AG04450 (cell line): ENCODE measurements at regions of chr1 and their contacts with region 1.

Region 1: GRCh38 chr1:40849801-40850592 is 12.2 kb downstream of the CITED4 start:
- DNase-seq: peak; percentile 16
- H3K4me3 ChIP-seq: no peak overlapping the region
- H3K27ac ChIP-seq: no peak overlapping the region
- H3K27me3 ChIP-seq: peaks cover 6% of the 10 kb centered on the region
- CTCF ChIP-seq: peak; percentile 88

Region 2: GRCh38 chr1:40630488-40631381 is 219.3 kb before region 1 on chr1:
- CTCF ChIA-PET with region 1: interaction called, 17 read pairs
- POLR2A ChIA-PET with region 1: no interaction called
- DNase-seq: no peak
- H3K4me3 ChIP-seq: no peak overlapping the region
- H3K27ac ChIP-seq: no peak overlapping the region
- H3K27me3 ChIP-seq: no peaks in the 10 kb centered on the region
- CTCF ChIP-seq: peak; percentile 60

Region 3: GRCh38 chr1:40774266-40774998 is 75.6 kb before region 1 on chr1:
- CTCF ChIA-PET with region 1: interaction called, 27 read pairs
- POLR2A ChIA-PET with region 1: no interaction called
- DNase-seq: no peak
- H3K4me3 ChIP-seq: no peak overlapping the region
- H3K27ac ChIP-seq: no peak overlapping the region
- H3K27me3 ChIP-seq: no peaks in the 10 kb centered on the region
- CTCF ChIP-seq: peak; percentile 70

Region 4: GRCh38 chr1:40825435-40825788 is 24.6 kb before region 1 on chr1:
- CTCF ChIA-PET with region 1: interaction called, 11 read pairs
- POLR2A ChIA-PET with region 1: no interaction called
- DNase-seq: no peak
- H3K4me3 ChIP-seq: no peak overlapping the region
- H3K27ac ChIP-seq: peak overlapping the region; percentile 47
- H3K27me3 ChIP-seq: peaks cover 15% of the 10 kb centered on the region
- CTCF ChIP-seq: no peak

Region 5: DNA sequence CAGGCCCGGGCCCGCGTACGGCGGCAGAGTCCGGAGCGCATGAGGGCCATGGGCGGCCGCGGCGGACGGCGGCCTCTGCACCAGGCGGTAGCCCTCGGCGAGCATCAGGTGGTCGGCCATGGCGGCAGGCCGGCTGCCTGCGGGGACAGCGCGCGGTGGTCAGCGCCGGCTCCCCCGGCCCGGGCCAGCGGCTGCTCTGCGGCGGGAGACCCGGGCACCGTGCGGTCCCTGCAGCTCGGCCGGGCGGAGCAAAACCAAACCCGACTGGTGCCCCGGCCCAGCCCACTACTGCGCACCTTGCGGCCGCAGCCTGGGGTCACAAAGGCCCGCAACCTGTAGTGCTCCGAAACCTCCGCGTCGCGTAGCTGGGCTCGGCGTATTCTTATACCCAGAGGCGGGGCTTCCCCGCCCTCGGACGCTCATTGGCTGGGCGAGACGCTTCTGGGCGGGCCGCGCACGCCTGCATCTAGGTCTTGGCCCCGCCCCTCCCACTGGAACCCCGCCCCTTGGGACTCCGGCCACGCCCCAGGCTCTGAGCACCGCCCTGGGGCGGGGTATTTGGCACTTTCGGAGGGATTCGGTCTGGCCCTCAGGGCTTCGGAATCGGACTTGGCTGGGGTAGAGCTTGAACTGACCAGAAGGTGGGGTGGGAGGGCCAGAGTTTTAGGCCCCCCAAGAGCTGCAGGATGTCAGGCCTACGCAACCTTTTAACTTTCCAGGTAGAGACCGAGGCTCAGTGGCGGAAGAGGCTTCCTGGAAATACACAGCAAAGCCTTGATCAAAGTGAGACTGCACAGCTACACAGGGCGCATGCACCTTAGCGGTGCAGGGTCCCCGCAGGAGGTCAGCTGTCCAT is 12.2 kb after region 1 on chr1 and contains the start of gene CITED4:
- CTCF ChIA-PET with region 1: interaction called, 35 read pairs
- POLR2A ChIA-PET with region 1: interaction called, 4 read pairs
- DNase-seq: peak; percentile 74
- H3K4me3 ChIP-seq: peak within 1 kb of the TSS; percentile 64
- H3K27ac ChIP-seq: no peak within 1 kb of the TSS
- H3K27me3 ChIP-seq: peaks cover 9% of the 10 kb centered on the region
- CTCF ChIP-seq: peak; percentile 28
- polyA plus RNA-seq, gene CITED4: 0.53 and 0.98 TPM in 2 replicates

Region 6: DNA sequence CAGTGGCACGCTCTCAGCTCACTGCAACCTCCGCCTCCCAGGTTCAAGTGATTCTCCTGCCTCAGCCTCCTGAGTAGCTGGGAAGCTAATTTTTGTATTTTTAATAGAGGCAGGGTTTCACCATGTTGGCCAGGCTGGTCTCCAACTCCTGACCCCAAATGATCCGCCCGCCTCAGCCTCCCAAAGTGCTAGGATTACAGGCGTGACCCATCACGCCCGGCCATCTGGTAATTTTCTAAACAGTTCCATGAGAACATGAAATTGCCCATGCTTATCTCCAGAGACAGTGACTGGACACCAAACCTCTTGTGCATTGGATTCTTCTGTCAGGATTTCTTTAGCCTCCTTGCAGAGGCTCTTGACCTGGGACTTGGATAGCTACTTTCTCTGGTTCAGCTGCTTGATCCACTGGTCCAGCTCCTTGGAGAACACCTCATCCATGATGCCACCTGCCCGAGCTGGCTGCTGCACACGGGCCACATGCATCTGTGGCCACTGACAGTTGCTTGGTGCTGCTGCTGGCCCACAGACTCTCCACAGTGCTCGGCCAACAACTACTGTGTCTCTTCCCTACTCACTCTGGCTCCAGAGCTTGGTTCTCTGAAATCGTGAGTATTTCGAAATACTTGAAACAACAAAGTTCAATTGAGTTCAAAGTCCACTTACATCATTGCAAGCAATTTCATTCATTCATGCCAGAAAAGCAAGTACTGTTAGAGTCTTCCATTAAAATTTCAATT is 89.5 kb after region 1 on chr1:
- CTCF ChIA-PET with region 1: interaction called, 21 read pairs
- POLR2A ChIA-PET with region 1: no interaction called
- DNase-seq: peak; percentile 8
- H3K4me3 ChIP-seq: no peak overlapping the region
- H3K27ac ChIP-seq: no peak overlapping the region
- H3K27me3 ChIP-seq: no peaks in the 10 kb centered on the region
- CTCF ChIP-seq: no peak

Region 7: GRCh38 chr1:41003640-41004220 is 153.7 kb after region 1 on chr1:
- CTCF ChIA-PET with region 1: interaction called, 16 read pairs
- POLR2A ChIA-PET with region 1: no interaction called
- DNase-seq: peak; percentile 97
- H3K4me3 ChIP-seq: no peak overlapping the region
- H3K27ac ChIP-seq: peak overlapping the region; percentile 79
- H3K27me3 ChIP-seq: no peaks in the 10 kb centered on the region
- CTCF ChIP-seq: peak; percentile 68